OCI-LY7 (cell line): ENCODE measurements at regions of chr3 and their contacts with region 1.

Region 1: DNA sequence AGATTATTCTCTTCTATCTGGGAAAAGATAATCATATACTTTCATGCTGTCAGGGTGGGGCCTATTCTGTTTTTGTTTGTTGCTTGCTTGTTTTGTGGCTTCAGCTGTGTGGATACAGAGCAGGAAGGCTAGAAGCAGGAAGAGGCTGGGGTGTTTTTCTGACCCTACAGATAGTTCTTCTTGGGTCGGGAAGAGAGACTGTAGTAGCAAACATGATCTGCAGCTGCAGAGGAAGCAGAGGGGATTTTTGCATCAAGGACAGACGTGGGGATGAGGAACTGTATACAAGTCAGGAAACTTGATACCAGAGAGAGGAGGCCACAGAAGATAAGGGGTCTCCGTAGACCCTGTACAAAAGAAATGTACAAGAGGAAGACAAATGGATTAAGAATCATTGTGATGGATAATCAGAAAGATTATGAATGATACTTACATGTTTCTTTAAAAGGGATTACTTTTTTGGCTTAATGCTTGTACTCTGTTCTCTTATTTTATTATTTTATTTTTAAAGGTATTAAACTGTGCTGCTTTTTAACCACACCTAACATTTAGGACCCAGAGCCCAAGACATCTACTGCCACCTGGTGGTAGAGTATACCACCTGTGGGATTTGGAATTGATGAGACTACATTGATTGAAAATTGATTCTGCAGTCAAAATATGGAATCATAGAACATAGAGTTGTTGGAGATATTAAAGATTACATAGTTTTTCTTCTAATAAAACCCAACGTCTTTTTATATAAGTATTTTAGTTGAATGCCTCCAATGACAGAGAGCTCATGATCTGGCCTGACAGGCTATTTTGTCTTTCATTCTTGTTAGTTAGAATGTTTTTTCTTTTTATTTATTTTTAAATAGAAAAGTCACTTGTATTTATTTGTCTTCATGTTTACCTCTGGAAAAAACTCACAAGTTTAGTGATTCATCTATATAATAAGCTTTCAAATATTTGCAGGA is 87.3 kb upstream of the ROPN1 start:
- DNase-seq: peak; percentile 51
- H3K4me3 ChIP-seq: no peak overlapping the region
- H3K27ac ChIP-seq: no peak overlapping the region
- H3K4me1 ChIP-seq: no peaks in the 10 kb centered on the region
- CTCF ChIP-seq: peak; percentile 90

Region 2: DNA sequence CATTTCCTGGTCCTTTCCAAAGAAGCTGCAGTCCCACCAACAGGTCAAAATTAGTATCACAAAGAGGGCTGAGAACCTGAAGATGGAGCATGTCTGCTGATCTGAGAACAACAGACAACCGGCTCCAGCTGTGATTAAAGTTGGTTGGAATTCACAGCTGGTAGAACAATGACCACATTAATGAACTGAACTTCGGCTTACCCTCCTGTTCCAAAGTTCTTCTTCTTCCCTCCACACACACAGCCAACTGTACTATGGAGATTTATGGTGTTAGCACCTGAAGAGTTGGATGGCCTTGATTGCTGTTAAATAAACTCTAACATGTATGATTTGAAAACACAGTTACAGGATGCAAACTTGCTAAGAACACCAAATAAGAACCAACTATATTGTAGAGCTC is 59.9 kb before region 1 on chr3:
- CTCF ChIA-PET with region 1: no interaction called
- POLR2A ChIA-PET with region 1: no interaction called
- intact Hi-C with region 1: loop called (anchors 5 kb)
- DNase-seq: no peak
- H3K4me3 ChIP-seq: no peak overlapping the region
- H3K27ac ChIP-seq: no peak overlapping the region
- H3K4me1 ChIP-seq: no peaks in the 10 kb centered on the region
- CTCF ChIP-seq: no peak